ENCODE measurements at regions of chr9 and their contacts with region 1.

Region 1: GRCh38 chr9:100167915-100168654 is 69.0 kb downstream of the INVS start:
- DNase-seq: no peak
- H3K4me3 ChIP-seq: no peak overlapping the region
- H3K27ac ChIP-seq: no peak overlapping the region
- H3K4me1 ChIP-seq: no peaks in the 10 kb centered on the region
- H3K27me3 ChIP-seq: no peaks in the 10 kb centered on the region
- CTCF ChIP-seq: no peak

Region 2: DNA sequence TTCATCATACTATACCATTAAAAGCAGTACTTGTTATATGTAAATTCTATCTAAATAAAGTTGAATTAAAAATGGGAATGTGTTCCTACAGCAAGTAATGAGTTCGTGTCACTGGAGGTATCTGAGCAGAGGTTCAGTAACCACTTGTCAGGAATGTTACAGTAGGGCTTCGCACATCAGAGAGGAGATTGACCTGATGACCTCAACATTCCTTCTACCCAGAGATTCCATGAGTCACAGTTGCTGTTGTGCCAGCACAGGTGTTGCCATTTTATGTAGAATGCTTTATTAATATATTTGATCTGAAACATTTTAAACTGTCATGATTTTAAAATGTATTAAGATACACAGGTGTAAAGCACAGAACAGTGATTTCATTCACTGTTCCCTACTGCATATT is 201.4 kb before region 1 on chr9:
- CTCF ChIA-PET with region 1: no interaction called
- POLR2A ChIA-PET with region 1: no interaction called
- intact Hi-C with region 1: no loop called
- DNase-seq: no peak
- H3K4me3 ChIP-seq: no peak overlapping the region
- H3K27ac ChIP-seq: no peak overlapping the region
- H3K4me1 ChIP-seq: no peaks in the 10 kb centered on the region
- H3K27me3 ChIP-seq: no peaks in the 10 kb centered on the region
- CTCF ChIP-seq: no peak

Region 3: GRCh38 chr9:100150214-100150613 is 17.9 kb before region 1 on chr9:
- CTCF ChIA-PET with region 1: no interaction called
- POLR2A ChIA-PET with region 1: no interaction called
- intact Hi-C with region 1: loop called (anchors 2 kb)
- DNase-seq: peak; percentile 27
- H3K4me3 ChIP-seq: no peak overlapping the region
- H3K27ac ChIP-seq: no peak overlapping the region
- H3K4me1 ChIP-seq: peaks cover 12% of the 10 kb centered on the region
- H3K27me3 ChIP-seq: no peaks in the 10 kb centered on the region
- CTCF ChIP-seq: no peak